ENCODE measurements at regions of chr14 and their contacts with region 1.

Region 1: DNA sequence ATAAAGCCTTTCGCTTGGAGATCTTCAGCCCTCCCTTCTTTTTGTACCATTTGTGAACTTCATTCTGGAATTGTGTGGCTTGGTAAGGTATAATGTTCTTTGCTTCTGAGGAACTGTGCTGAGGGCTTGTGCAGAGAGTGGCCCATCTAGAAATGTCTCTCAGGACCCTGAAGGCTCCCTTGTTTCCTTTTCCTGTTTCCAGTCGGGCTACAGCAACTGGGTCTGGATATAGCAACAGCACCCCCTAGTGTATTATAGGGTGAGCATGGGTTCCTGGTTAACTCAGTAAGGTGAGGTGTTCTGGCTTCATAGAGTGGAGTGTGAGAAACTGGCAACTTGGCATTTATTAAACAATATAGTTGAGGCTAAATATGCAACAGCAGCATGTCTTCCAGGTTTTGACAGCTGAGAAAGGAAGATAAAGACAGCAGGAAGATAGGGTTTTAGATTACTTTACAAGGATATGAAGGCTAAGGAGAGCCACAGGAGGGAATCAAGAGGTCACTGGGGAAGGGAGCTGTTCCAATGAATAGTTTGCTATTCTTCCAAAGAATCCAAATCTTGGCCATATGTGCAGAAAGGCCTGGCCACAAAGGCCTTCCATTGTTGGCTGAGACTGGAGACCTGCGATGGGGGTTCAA is 49.1 kb upstream of the RNU6-8 start:
- DNase-seq: peak; percentile 85

Region 2: DNA sequence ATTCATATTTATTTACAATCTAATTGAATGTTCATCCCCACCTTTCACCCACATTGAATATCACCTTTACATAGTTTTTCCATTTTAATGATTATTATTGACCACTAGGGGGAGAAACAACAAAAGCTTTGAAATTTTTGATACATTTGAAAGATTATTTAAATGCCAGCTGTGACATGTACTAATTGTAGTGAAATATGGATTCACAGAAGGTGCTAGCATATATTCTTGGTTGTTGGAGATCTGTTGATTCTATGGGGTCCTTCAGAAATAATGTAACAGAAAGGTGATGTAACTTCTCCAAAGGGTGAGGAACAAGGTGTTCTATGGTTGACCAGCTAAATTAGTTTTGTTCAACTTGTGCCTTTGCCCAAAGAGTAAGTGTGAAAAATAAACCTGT is 741.9 kb before region 1 on chr14:
- in situ Hi-C with region 1: loop called (anchors 25 kb)
- DNase-seq: peak; percentile 24

Region 3: GRCh38 chr14:31937721-31938346 is 314.3 kb before region 1 on chr14:
- in situ Hi-C with region 1: loop called (anchors 25 kb)
- DNase-seq: no peak

Region 4: GRCh38 chr14:33127531-33127930 is 875.4 kb after region 1 on chr14:
- in situ Hi-C with region 1: no loop called
- DNase-seq: no peak